ENCODE measurements at regions of chr9 and their contacts with region 1.

Region 1: GRCh38 chr9:92963831-92964626 is 16.7 kb downstream of the FGD3 start:
- DNase-seq: peak; percentile 83
- ATAC-seq: peak; percentile 59
- H3K4me3 Mint-ChIP-seq: peak overlapping the region; percentile 89
- H3K27ac Mint-ChIP-seq: peak overlapping the region; percentile 99
- H3K4me1 Mint-ChIP-seq: peaks cover 56% of the 10 kb centered on the region
- H3K27me3 Mint-ChIP-seq: no peaks in the 10 kb centered on the region

Region 2: GRCh38 chr9:92986176-92987085 is 22.4 kb after region 1 on chr9:
- CTCF ChIA-PET with region 1: interaction called, 4 read pairs
- POLR2A ChIA-PET with region 1: no interaction called
- intact Hi-C with region 1: loop called in 1 of 2 experiments (anchors 2 kb)
- DNase-seq: peak; percentile 69
- ATAC-seq: no peak
- H3K4me3 Mint-ChIP-seq: no peak overlapping the region
- H3K27ac Mint-ChIP-seq: peak overlapping the region; percentile 87
- H3K4me1 Mint-ChIP-seq: peaks cover 76% of the 10 kb centered on the region
- H3K27me3 Mint-ChIP-seq: no peaks in the 10 kb centered on the region

Region 3: DNA sequence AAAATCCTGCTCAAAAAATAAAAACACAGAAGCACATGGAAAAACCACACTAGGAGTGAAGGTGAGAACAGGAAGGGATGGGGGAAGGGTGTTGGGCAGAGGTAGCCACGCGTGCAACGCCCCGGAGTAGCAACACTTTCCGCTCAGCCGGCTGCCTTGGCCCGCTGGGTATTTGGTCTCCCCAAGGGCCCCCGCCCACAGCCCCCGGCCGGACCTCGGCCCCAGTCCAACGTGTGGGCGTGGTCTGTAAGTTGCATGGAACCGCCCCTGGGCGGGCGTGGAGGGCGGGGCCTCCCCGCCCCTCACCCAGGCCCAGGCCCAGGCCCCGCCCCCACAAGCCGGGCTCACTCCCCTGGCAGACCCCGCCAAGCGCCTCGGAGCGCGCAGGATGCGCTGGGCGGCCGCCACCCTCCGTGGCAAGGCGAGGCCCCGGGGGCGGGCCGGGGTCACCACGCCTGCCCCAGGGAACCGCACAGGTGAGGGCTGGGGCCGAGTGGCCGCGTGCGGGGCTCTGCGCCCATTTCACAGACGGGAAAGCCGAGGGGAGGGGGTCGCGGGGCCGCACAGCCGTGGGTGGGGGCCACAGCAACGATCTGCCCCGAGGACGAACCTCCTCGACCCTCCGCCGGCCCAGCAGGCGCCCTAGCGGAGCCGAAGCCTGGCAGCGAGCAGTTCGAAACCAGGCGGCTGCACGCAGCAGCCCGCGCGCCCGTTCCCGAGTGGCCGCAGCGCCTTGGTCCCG is 94.5 kb after region 1 on chr9 and contains the start of gene SUSD3:
- CTCF ChIA-PET with region 1: no interaction called
- POLR2A ChIA-PET with region 1: no interaction called
- intact Hi-C with region 1: loop called (anchors 2 to 5 kb)
- DNase-seq: peak; percentile 86
- ATAC-seq: peak; percentile 66
- H3K4me3 Mint-ChIP-seq: peak within 1 kb of the TSS; percentile 90
- H3K27ac Mint-ChIP-seq: peak within 1 kb of the TSS; percentile 98
- H3K4me1 Mint-ChIP-seq: peaks cover 55% of the 10 kb centered on the region
- H3K27me3 Mint-ChIP-seq: no peaks in the 10 kb centered on the region
- total RNA-seq, gene SUSD3: 51.4 to 57.9 TPM

Region 4: GRCh38 chr9:93143830-93144530 is 180.0 kb after region 1 on chr9:
- CTCF ChIA-PET with region 1: no interaction called
- POLR2A ChIA-PET with region 1: no interaction called
- intact Hi-C with region 1: loop called in 1 of 2 experiments (anchors 5 kb)
- DNase-seq: peak; percentile 60
- ATAC-seq: peak; percentile 57
- H3K4me3 Mint-ChIP-seq: no peak overlapping the region
- H3K27ac Mint-ChIP-seq: peak overlapping the region; percentile 91
- H3K4me1 Mint-ChIP-seq: peaks cover 64% of the 10 kb centered on the region
- H3K27me3 Mint-ChIP-seq: no peaks in the 10 kb centered on the region